PC-3 (cell line): ENCODE measurements at regions of chr5 and their contacts with region 1.

Region 1: GRCh38 chr5:137888857-137889759 is at the start of gene PKD2L2:
- DNase-seq: peak; percentile 86
- ATAC-seq: peak; percentile 96
- H3K4me3 ChIP-seq: peak within 1 kb of the TSS; percentile 72
- H3K27ac ChIP-seq: peak within 1 kb of the TSS; percentile 69
- H3K4me1 ChIP-seq: peaks cover 28% of the 10 kb centered on the region
- H3K27me3 ChIP-seq: no peaks in the 10 kb centered on the region
- CTCF ChIP-seq: no peak
- total RNA-seq, gene PKD2L2: not detected in 2 replicates

Region 2: DNA sequence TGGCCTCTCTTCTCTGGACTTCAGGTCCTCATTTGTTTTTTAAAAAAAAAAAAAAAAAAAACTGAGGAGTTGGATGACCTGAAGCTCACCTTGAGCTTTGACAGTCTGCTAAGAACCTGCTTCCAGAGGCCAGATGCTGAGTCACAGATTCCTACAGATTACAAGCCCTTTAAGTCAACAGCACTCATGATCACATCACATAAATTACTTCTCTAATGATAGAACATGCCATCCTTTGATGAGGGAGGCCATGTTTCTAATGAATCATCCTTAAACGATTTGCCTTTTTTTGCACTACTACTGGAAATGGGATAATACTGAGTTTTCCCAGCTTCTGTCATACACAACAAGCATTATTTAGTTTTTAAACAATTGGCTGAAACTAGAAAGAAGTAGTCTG is 55.6 kb before region 1 on chr5:
- CTCF ChIA-PET with region 1: no interaction called
- POLR2A ChIA-PET with region 1: no interaction called
- intact Hi-C with region 1: loop called (anchors 2 kb)
- DNase-seq: peak; percentile 90
- ATAC-seq: peak; percentile 96
- H3K4me3 ChIP-seq: no peak overlapping the region
- H3K27ac ChIP-seq: peak overlapping the region; percentile 52
- H3K4me1 ChIP-seq: peaks cover 27% of the 10 kb centered on the region
- H3K27me3 ChIP-seq: no peaks in the 10 kb centered on the region
- CTCF ChIP-seq: no peak